Stomach (tissue), 19 donors: ENCODE measurements at regions of chr4 and their contacts with region 1.

Region 1: GRCh38 chr4:155946486-155946885 is 7.2 kb downstream of the CTSO start:
- DNase-seq: no peak
- H3K4me3 ChIP-seq: no peak overlapping the region
- H3K27ac ChIP-seq: no peak overlapping the region
- H3K4me1 ChIP-seq: peaks cover 0 to 11% (median 4%) of the 10 kb centered on the region in 4 donors
- H3K27me3 ChIP-seq: no peaks in the 10 kb centered on the region
- CTCF ChIP-seq: no peak
- EP300 ChIP-seq: no peak
- POLR2A ChIP-seq: no peak

Region 2: DNA sequence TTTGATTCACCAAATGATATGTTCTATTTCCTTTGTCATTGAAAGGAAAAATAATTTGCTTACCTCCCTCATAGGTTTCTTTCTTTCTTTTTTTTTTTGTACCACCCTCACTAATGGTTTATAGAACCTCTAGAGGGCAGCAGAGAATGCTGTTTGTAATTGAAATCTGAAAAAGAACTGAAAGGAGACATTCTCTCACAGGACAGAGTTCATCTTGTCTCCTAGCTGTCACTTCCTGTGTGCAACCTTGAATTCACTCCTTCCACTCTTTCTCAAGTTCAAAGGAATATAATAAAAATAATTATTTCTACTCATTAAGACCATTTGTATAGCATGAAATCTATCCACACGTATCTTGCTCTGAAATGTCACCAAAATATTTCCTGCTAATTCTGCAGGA is 136.7 kb before region 1 on chr4:
- intact Hi-C with region 1: loop called (anchors 5 kb)
- DNase-seq: peak in 1 of 2 donors; percentile 85
- H3K4me3 ChIP-seq: no peak overlapping the region
- H3K27ac ChIP-seq: no peak overlapping the region
- H3K4me1 ChIP-seq: peaks cover 0 to 8% (median 0%) of the 10 kb centered on the region in 4 donors
- H3K27me3 ChIP-seq: no peaks in the 10 kb centered on the region
- CTCF ChIP-seq: peak in 5 of 7 experiments; percentile 35 to 58 (median 53)
- EP300 ChIP-seq: no peak
- POLR2A ChIP-seq: no peak